ENCODE measurements at regions of chr1 and their contacts with region 1.

Region 1: DNA sequence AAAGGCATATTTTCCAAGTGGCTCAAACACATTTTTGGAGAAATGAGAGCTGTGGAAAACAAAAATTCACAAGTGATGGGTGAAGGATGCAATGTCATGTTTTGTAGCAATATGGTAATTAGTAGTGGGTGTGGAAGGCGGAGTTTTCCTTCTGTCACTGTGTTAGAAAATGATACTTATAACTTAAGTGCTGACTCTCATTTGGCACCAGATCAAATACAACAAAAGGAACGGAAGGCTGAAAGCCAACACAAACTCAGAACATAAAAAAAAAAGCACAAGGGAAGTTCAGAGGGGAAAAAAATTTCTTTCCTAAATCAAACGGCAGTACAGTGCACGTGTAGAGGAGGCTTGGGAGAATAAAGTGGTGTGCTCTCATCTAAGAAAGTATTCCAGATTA is at the start of gene TNFSF18:
- DNase-seq: peak; percentile 94
- H3K4me3 Mint-ChIP-seq: peak within 1 kb of the TSS; percentile 28
- H3K27ac Mint-ChIP-seq: peak within 1 kb of the TSS; percentile 54
- H3K4me1 Mint-ChIP-seq: peaks cover 39% of the 10 kb centered on the region
- H3K27me3 Mint-ChIP-seq: no peaks in the 10 kb centered on the region
- CTCF ChIP-seq: no peak
- total RNA-seq, gene TNFSF18: 0.29 and 0.49 TPM in 2 replicates

Region 2: DNA sequence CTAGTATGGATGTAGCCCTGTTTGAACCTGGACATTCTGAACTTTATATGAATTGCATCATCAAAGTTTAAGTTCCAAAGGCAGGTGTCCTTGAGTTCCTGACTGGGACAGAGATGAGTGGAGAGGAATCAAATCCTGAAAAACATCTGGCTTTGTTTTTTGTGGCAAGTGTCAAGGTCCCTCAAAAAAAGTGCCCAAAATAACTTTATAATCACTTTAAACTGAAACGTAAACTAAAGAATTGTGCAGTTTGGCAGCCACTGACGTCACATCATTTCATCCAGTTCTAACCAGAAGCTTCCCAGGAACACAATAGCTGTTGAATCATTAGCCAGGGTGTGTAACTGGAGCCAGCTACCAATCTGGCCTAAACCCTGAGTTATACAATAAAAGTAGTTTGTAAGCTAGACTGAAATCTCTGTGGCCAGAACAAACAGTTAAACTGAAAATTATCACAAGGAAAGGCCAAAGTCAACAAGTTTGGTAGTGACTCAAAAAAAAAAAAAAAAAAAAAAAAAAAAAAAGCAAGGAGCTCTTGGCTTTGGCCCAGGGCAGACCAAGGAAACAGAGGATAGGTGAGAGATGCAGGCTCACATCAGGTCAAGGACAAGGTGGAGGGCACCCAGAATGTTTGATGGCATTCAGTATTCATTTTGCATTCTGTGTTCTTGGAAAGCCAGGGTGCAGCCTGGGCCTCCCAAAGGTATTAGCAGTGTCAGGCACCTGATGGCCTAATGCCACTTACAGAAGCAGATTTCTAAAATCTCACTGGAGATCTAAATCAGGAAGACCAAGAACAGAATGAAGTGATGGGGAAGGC is 74.4 kb before region 1 on chr1:
- CTCF ChIA-PET with region 1: no interaction called
- POLR2A ChIA-PET with region 1: interaction called, 18 read pairs
- intact Hi-C with region 1: no loop called
- DNase-seq: peak; percentile 98
- H3K4me3 Mint-ChIP-seq: no peak overlapping the region
- H3K27ac Mint-ChIP-seq: peak overlapping the region; percentile 88
- H3K4me1 Mint-ChIP-seq: peaks cover 47% of the 10 kb centered on the region
- H3K27me3 Mint-ChIP-seq: no peaks in the 10 kb centered on the region
- CTCF ChIP-seq: no peak

Region 3: DNA sequence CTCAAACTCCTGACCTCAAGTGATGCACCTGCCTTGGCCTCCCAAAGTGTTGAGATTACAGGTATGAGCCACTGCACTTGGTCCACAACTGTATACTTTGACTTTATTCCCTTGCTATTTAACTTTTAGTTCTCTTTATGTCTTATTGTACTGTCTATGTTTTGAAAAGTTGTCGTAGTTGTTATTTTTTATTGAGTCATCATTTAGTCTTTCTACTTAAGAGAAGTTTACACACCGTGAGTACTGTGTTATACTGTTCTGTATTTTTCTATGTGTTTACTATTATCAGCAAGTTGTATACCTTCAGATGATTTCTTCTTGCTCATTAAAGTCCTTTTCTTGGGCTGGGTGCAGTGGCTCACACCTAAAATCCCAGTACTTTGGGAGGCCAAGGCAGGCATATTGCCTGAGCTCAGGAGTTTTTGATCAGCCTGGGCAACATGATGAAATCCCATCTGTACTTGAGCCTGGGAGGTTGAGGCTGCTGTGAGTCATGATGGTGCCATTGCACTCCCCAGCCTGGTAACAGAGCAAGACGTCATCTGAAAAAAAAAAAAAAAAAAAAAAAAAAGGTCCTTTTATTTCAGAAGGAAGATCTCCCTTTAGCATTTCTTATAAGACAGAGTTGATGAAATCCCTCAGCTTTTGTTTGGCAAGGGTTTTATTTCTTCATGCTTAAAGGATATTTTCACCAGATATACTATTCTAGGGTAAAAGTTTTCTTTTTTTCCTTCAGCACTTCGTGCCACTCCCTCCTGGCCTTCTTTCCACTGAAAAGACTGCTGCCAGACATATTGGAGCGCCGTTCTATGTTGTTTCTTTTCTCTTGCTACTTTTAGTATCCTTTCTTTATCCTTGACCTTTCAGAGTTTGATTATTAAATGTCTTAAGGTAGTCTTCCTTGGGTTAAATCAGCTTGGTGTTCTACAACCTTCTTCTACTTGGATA is 47.7 kb before region 1 on chr1:
- CTCF ChIA-PET with region 1: no interaction called
- POLR2A ChIA-PET with region 1: interaction called, 7 read pairs
- intact Hi-C with region 1: loop called (anchors 5 kb)
- DNase-seq: peak; percentile 95
- H3K4me3 Mint-ChIP-seq: no peak overlapping the region
- H3K27ac Mint-ChIP-seq: peak overlapping the region; percentile 36
- H3K4me1 Mint-ChIP-seq: peaks cover 16% of the 10 kb centered on the region
- H3K27me3 Mint-ChIP-seq: no peaks in the 10 kb centered on the region
- CTCF ChIP-seq: no peak

Region 4: DNA sequence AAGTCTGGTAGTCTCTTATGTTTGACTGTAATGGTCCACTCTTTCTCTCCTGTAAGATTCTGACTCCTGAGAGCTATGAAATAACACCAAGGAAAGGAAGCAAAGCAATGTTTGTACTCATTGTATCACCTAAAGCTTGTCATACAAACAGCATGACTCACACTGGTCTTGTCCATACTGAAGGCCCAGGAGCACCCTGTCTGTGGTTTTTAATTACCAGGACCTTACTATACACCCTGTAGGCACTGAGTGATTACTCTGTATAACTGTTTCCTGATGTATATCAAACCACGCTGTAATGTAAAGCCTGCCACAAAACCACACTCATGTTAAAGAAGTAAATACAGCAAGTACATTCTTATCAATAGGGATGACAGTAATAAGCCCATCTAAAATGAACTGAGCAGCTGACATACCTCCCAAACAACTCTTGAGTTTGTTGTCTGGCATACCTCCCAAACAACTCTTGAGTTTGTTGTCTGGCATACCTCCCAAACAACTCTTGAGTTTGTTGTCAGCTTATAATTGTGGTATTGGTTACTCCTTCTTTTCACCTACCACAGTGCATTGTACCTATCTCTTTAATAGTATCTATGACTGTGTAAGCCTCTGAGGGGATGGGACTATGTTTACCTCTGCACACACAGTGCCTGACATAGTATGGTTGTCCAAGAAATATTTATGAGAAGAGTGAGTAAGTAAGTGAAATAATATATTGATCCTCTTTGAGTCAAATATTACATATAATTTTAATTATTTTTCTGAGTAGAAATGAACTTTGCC is 11.5 kb after region 1 on chr1:
- CTCF ChIA-PET with region 1: interaction called, 4 read pairs
- POLR2A ChIA-PET with region 1: interaction called, 23 read pairs
- intact Hi-C with region 1: no loop called
- DNase-seq: peak; percentile 88
- H3K4me3 Mint-ChIP-seq: no peak overlapping the region
- H3K27ac Mint-ChIP-seq: peak overlapping the region; percentile 40
- H3K4me1 Mint-ChIP-seq: peaks cover 14% of the 10 kb centered on the region
- H3K27me3 Mint-ChIP-seq: no peaks in the 10 kb centered on the region
- CTCF ChIP-seq: no peak

Region 5: DNA sequence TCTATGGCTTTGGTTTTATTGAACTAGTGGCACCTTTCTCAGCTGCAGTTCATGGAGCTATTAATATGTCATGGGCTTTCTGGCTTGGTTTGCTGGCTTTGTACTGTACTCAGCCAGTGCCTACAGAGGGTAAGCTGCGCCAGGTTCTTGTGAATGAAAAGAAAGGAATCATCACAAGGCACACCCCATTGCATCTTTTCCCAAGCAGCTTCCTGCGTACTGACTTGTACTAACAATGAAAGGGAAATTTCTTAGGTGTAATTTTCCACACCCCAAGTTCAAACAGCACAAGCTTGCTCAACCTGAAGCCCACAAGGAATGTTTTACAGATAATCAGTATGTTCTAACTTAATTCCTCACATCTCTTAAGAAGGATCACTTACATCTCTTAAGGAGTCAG is 77.9 kb after region 1 on chr1:
- CTCF ChIA-PET with region 1: no interaction called
- POLR2A ChIA-PET with region 1: no interaction called
- intact Hi-C with region 1: no loop called
- DNase-seq: peak; percentile 11
- H3K4me3 Mint-ChIP-seq: no peak overlapping the region
- H3K27ac Mint-ChIP-seq: no peak overlapping the region
- H3K4me1 Mint-ChIP-seq: peaks cover 11% of the 10 kb centered on the region
- H3K27me3 Mint-ChIP-seq: no peaks in the 10 kb centered on the region
- CTCF ChIP-seq: no peak

Region 6: GRCh38 chr1:173140733-173141132 is 89.9 kb after region 1 on chr1:
- CTCF ChIA-PET with region 1: no interaction called
- POLR2A ChIA-PET with region 1: no interaction called
- intact Hi-C with region 1: no loop called
- DNase-seq: no peak
- H3K4me3 Mint-ChIP-seq: no peak overlapping the region
- H3K27ac Mint-ChIP-seq: no peak overlapping the region
- H3K4me1 Mint-ChIP-seq: peaks cover 11% of the 10 kb centered on the region
- H3K27me3 Mint-ChIP-seq: no peaks in the 10 kb centered on the region
- CTCF ChIP-seq: no peak

Region 7: GRCh38 chr1:173190101-173190906 is 139.4 kb after region 1 on chr1:
- CTCF ChIA-PET with region 1: interaction called, 5 read pairs
- POLR2A ChIA-PET with region 1: interaction called, 3 read pairs
- intact Hi-C with region 1: loop called (anchors 5 kb)
- DNase-seq: peak; percentile 100
- H3K4me3 Mint-ChIP-seq: peak overlapping the region; percentile 44
- H3K27ac Mint-ChIP-seq: peak overlapping the region; percentile 93
- H3K4me1 Mint-ChIP-seq: peaks cover 29% of the 10 kb centered on the region
- H3K27me3 Mint-ChIP-seq: no peaks in the 10 kb centered on the region
- CTCF ChIP-seq: no peak

Measured in MCF 10A (cell line).